Activated naive CD4-positive, alpha-beta T cell treated with anti-CD3 and anti-CD28 coated beads for 36 hours (primary cell): ENCODE measurements at regions of chr21 and their contacts with region 1.

Region 1: DNA sequence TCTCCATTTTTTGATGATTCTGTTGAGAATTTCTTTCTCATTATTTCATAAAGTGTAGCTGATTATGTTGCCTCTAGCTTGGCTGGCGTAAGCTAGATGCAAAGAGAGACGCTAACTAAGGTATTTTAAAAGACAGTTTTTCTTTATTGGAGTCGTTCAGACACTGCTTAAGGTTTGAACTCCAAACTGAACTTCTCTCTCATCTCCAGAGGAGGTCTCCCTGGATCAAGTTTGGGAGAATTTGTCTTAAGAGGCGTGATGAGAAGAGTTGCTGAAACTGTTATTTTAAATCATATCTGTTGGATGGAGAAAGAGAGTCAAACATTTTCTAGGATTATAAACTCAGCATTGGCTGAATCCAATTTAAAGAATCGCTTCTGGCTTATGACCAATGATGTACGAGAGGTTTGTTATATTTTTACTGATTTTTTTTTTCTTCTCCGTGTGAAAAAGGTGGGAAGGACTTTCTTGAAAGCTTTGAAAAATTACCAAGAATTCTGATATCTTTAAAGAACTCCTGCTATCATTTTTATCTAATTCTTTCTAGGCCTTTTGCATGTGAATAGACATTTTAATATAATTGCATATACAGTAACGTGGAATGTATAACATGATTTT is 34.0 kb downstream of the MAP3K7CL start:
- DNase-seq: no peak
- H3K4me3 Mint-ChIP-seq: no peak overlapping the region
- H3K27ac Mint-ChIP-seq: no peak overlapping the region
- H3K4me1 Mint-ChIP-seq: no peaks in the 10 kb centered on the region
- H3K27me3 Mint-ChIP-seq: no peaks in the 10 kb centered on the region

Region 2: GRCh38 chr21:29265690-29266479 is 101.5 kb after region 1 on chr21:
- CTCF ChIA-PET with region 1: no interaction called
- intact Hi-C with region 1: no loop called
- DNase-seq: peak; percentile 75
- H3K4me3 Mint-ChIP-seq: no peak overlapping the region
- H3K27ac Mint-ChIP-seq: peak overlapping the region; percentile 51
- H3K4me1 Mint-ChIP-seq: peaks cover 15% of the 10 kb centered on the region
- H3K27me3 Mint-ChIP-seq: no peaks in the 10 kb centered on the region

Region 3: GRCh38 chr21:29343519-29343918 is 179.1 kb after region 1 on chr21:
- CTCF ChIA-PET with region 1: interaction called, 11 read pairs
- intact Hi-C with region 1: loop called (anchors 1 kb)
- DNase-seq: no peak
- H3K4me3 Mint-ChIP-seq: no peak overlapping the region
- H3K27ac Mint-ChIP-seq: no peak overlapping the region
- H3K4me1 Mint-ChIP-seq: peaks cover 39% of the 10 kb centered on the region
- H3K27me3 Mint-ChIP-seq: no peaks in the 10 kb centered on the region

Region 4: GRCh38 chr21:29351691-29352090 is 187.3 kb after region 1 on chr21:
- CTCF ChIA-PET with region 1: interaction called, 11 read pairs
- intact Hi-C with region 1: loop called (anchors 1 kb)
- DNase-seq: no peak
- H3K4me3 Mint-ChIP-seq: no peak overlapping the region
- H3K27ac Mint-ChIP-seq: no peak overlapping the region
- H3K4me1 Mint-ChIP-seq: peaks cover 19% of the 10 kb centered on the region
- H3K27me3 Mint-ChIP-seq: no peaks in the 10 kb centered on the region